ENCODE measurements at regions of chr16 and their contacts with region 1.

Region 1: DNA sequence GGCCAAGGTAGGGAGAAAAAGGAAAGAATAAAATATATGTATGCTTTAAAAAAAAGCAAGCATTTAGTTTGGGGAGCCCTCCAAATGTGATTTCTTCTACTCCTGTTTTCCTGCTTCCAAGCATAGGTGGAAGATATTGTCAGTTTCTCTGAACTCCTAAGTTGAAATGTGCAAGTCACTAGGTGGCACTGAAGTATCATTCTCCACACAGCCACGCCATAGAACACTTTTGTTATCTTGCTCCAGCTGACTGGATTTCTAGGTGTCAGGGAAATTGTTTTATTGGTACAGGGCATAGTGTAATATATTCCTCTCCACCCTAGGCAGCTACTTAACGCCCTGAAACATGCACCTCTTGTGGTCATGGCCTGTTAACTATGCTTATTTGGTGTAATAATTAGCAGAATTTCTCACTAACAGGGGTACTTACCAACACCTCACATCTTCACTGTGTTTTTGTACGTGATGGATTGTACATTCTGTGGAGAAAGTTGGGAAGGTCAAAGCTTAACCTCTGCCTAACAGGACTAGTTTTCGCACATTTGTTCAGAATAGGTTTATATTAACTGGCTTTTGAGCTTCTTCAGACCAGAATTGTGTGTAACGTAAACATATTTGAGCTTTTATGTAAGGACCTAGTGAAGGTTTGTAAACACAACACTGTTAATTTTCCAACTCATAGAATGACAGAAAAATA is 69.3 kb downstream of the FTO start:
- DNase-seq: peak; percentile 34 to 69
- H3K4me3 ChIP-seq: no peak overlapping the region
- H3K27ac ChIP-seq: no peak overlapping the region
- H3K4me1 ChIP-seq: peaks cover 77% of the 10 kb centered on the region
- H3K27me3 ChIP-seq: no peaks in the 10 kb centered on the region
- CTCF ChIP-seq: peak; percentile 78

Region 2: DNA sequence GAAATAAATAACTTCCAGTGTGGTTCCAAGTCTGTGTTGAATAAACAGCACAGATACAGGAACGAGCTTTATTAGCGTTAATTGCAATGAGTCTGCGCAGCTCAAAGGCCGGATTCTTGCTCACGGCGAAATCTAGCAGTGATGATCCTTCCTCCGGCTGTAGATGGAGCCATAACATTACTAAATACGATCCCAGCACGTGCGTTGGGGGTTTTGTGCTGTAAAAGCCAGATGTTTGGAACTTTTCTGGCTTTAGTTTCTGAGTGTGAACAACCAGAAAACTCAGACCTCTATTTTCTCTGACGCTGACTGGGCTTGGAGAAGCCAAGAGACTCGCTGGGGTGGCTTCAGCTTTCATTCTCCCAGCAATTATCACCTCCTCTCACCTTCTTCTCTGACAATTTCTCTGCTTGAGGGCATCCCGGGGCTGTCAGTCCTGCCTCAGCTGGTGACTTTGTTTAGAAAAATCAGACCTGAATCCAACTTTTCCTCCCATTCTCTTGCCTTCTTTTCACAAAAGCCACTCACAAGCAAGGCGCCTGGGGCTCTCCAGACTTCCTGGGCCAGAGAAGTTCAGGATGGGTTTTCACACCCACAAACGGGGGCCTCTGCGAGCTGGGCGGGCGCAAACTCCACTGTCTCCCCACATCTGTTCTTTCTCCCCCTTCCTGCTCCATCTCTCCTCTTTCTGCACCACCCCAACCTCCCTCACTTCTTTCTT is 223.2 kb before region 1 on chr16:
- CTCF ChIA-PET with region 1: no interaction called
- POLR2A ChIA-PET with region 1: no interaction called
- intact Hi-C with region 1: loop called (anchors 2 kb)
- DNase-seq: peak; percentile 41 to 55
- H3K4me3 ChIP-seq: no peak overlapping the region
- H3K27ac ChIP-seq: no peak overlapping the region
- H3K4me1 ChIP-seq: no peaks in the 10 kb centered on the region
- H3K27me3 ChIP-seq: no peaks in the 10 kb centered on the region
- CTCF ChIP-seq: peak; percentile 78

Region 3: GRCh38 chr16:53892155-53892554 is 118.9 kb after region 1 on chr16:
- CTCF ChIA-PET with region 1: interaction called, 6 read pairs
- POLR2A ChIA-PET with region 1: no interaction called
- intact Hi-C with region 1: loop called (anchors 1 kb)
- DNase-seq: peak in 1 of 2 experiments; percentile 47
- H3K4me3 ChIP-seq: no peak overlapping the region
- H3K27ac ChIP-seq: no peak overlapping the region
- H3K4me1 ChIP-seq: peaks cover 32% of the 10 kb centered on the region
- H3K27me3 ChIP-seq: no peaks in the 10 kb centered on the region
- CTCF ChIP-seq: peak; percentile 87

Region 4: DNA sequence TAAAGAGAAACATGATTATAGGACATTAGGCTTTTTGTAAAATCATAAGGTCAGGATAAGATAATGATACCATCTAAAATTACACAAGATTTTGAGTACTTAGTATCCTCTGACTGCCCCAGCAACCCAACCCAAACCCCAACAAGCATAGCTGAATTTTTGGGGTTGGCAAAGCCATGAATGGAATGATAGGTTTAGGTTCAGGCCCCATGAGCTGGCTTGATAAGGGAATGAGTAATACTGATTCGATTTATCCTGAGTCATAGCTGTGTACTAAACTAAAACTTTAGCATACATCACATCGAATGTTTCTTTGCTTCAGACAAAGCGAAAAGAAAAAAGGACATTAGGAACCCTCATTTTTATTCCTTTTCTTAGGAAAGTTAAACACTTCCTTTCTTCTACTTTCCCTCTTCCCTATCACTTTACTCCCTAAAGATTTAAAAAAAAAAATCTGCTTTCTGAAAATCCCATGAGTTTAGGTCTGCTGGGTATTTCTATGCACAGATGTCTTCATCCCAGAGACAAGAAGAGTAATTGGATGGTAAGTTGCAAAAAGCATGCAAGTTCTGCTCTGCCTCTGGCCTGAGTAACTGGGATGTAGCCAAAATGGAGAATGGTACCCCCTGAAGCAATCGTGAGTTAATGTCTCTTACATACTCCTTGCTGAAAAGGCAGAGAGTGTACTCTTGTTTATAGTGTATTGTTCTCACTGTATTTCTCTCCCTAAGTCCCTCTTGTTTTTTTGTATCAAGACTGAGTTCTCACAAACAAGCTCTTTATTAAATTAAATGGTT is 254.0 kb after region 1 on chr16:
- CTCF ChIA-PET with region 1: no interaction called
- POLR2A ChIA-PET with region 1: interaction called, 7 read pairs
- intact Hi-C with region 1: loop called (anchors 2 kb)
- DNase-seq: peak; percentile 66 to 96
- H3K4me3 ChIP-seq: peak overlapping the region; percentile 29; the same call in 1 of the 2 replicates
- H3K27ac ChIP-seq: peak overlapping the region; percentile 90
- H3K4me1 ChIP-seq: peaks cover 69% of the 10 kb centered on the region
- H3K27me3 ChIP-seq: no peaks in the 10 kb centered on the region
- CTCF ChIP-seq: no peak

Region 5: GRCh38 chr16:54178478-54178976 is 405.2 kb after region 1 on chr16:
- CTCF ChIA-PET with region 1: no interaction called
- POLR2A ChIA-PET with region 1: no interaction called
- intact Hi-C with region 1: no loop called
- DNase-seq: no peak
- H3K4me3 ChIP-seq: no peak overlapping the region
- H3K27ac ChIP-seq: no peak overlapping the region
- H3K4me1 ChIP-seq: no peaks in the 10 kb centered on the region
- H3K27me3 ChIP-seq: no peaks in the 10 kb centered on the region
- CTCF ChIP-seq: no peak

Region 6: DNA sequence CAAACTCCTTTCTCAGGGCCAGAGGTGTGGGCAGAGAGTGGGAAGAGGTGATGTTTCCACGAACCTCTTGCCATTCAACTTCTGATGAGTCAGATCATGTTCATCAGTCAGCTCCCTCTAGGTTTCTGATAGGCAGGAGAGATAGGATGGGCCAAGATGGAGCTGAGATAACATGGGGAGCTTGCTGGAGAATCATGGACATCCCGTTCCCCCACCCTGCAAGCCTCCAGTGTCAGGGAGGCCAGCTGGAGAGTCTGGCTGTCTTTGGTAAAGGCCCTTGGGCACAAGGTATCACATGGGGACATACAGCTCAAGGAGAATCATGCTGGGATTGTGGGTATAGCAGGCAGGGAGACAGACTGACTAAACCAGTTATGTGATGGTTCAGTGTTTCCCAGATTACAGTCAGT is 649.3 kb after region 1 on chr16:
- CTCF ChIA-PET with region 1: no interaction called
- POLR2A ChIA-PET with region 1: interaction called, 8 read pairs
- intact Hi-C with region 1: loop called (anchors 5 kb)
- DNase-seq: peak; percentile 45 to 74
- H3K4me3 ChIP-seq: no peak overlapping the region
- H3K27ac ChIP-seq: peak overlapping the region; percentile 56
- H3K4me1 ChIP-seq: peaks cover 62% of the 10 kb centered on the region
- H3K27me3 ChIP-seq: no peaks in the 10 kb centered on the region
- CTCF ChIP-seq: no peak

Region 7: DNA sequence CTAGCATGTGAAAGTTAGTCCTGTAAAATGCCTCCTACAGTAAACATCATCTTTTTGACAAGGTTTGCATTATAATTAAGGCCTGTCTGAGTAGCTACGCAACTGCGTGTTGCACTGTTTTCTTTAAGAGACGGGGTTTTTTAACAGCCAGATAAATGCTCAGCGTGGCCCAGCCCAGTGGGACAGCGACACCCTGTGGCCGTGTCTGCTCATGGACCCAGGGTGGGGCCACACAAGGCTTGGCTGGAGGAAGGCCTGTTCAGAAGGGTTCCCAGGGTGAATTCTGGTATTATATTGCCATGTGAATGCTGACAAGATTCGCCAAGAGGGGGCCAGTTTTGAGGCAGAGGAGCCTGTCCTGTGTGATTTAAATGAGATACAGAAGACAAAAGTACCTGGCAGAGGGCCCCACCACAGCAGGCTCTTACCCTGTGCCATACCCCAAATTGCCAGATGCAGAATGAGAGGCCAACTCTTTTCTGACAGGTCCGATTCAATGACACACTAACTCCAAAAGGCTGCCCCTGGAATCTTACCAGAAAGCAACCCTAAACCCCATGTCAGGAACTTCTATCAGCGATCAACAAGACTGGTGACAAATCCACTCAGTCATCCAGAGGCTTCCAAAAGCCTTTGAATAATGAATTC is 1484.8 kb after region 1 on chr16:
- CTCF ChIA-PET with region 1: no interaction called
- POLR2A ChIA-PET with region 1: no interaction called
- intact Hi-C with region 1: loop called (anchors 10 kb)
- DNase-seq: peak in 1 of 2 experiments; percentile 11
- H3K4me3 ChIP-seq: no peak overlapping the region
- H3K27ac ChIP-seq: no peak overlapping the region
- H3K4me1 ChIP-seq: no peaks in the 10 kb centered on the region
- H3K27me3 ChIP-seq: no peaks in the 10 kb centered on the region
- CTCF ChIP-seq: peak; percentile 86